ENCODE measurements at regions of chr10 and their contacts with region 1.

Region 1: DNA sequence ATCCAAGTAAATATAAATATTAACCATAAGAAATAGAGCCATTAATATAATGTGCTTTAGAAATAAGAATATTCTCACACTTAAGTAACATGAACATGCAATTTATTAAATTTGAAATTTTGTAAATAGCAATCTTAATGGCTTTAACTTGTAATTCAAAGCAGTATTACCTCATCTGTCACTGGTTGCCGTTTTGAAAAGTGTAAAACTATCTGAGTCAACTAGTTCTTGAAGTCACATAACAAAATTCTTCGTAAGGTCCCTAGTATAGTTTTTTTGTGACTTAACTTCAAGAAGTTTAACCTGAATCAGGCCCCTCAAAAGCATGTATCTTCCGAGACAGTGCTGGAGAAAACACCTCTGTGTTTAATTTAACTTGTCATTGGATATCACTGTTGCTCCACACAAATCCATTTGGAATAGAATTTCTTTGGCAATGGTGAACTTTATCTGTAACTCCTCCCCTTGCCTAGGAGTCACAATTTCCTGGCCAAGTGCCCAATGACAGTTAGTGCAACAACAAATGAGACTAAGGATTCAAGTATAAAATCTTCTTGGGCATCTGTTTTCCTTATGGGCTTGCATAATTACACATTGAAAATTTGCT is 47.1 kb downstream of the NT5C2 start:
- DNase-seq: peak; percentile 67 to 84 (median 83)
- ATAC-seq: peak; percentile 79 to 87
- H3K4me3 ChIP-seq: peak overlapping the region; percentile 22
- H3K27ac ChIP-seq: no peak overlapping the region
- H3K4me1 ChIP-seq: peaks cover 2% of the 10 kb centered on the region
- H3K27me3 ChIP-seq: no peaks in the 10 kb centered on the region

Region 2: GRCh38 chr10:103168486-103169311 is 22.7 kb after region 1 on chr10:
- intact Hi-C with region 1: loop called in 1 of 4 experiments (anchors 2 kb)
- DNase-seq: no peak
- ATAC-seq: no peak
- H3K4me3 ChIP-seq: no peak overlapping the region
- H3K27ac ChIP-seq: no peak overlapping the region
- H3K4me1 ChIP-seq: no peaks in the 10 kb centered on the region
- H3K27me3 ChIP-seq: no peaks in the 10 kb centered on the region

Measured in right cardiac atrium (tissue), 5 donors.